Mammary epithelial cell (primary cell): ENCODE measurements at regions of chr2 and their contacts with region 1.

Region 1: GRCh38 chr2:123453772-123454171 is 571.3 kb upstream of the CNTNAP5 start:
- DNase-seq: no peak
- H3K4me3 ChIP-seq: no peak overlapping the region
- H3K27ac ChIP-seq: no peak overlapping the region
- H3K4me1 ChIP-seq: no peaks in the 10 kb centered on the region
- H3K27me3 ChIP-seq: no peaks in the 10 kb centered on the region
- CTCF ChIP-seq: no peak

Region 2: DNA sequence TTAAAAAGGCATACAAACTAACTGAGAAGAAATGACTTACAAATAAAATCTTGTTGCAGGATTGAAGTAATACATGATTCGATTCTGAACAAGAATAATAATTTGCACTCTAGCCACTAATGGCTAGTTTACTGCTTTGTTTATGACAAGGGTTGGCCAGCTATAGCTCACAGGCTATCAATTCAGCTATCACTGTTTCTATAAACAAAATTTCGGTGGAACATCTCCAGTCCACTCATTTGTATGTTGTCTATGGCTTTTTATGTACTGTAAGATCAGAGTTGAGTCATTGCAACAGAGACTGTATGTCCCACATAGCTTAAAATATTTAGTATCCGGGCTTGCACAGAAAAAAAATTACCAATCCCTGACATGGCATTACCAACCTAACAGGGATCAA is 27.6 kb after region 1 on chr2:
- CTCF ChIA-PET with region 1: no interaction called
- dilution Hi-C with region 1: no loop called
- in situ Hi-C with region 1: no loop called
- intact Hi-C with region 1: no loop called
- DNase-seq: no peak
- H3K4me3 ChIP-seq: no peak overlapping the region
- H3K27ac ChIP-seq: no peak overlapping the region
- H3K4me1 ChIP-seq: no peaks in the 10 kb centered on the region
- H3K27me3 ChIP-seq: no peaks in the 10 kb centered on the region
- CTCF ChIP-seq: no peak

Region 3: GRCh38 chr2:123840016-123840415 is 386.2 kb after region 1 on chr2:
- CTCF ChIA-PET with region 1: interaction called, 12 read pairs
- dilution Hi-C with region 1: no loop called
- in situ Hi-C with region 1: no loop called
- intact Hi-C with region 1: no loop called
- DNase-seq: peak; percentile 3
- H3K4me3 ChIP-seq: no peak overlapping the region
- H3K27ac ChIP-seq: no peak overlapping the region
- H3K4me1 ChIP-seq: no peaks in the 10 kb centered on the region
- H3K27me3 ChIP-seq: no peaks in the 10 kb centered on the region
- CTCF ChIP-seq: peak in 1 of 2 donors; percentile 7

Region 4: DNA sequence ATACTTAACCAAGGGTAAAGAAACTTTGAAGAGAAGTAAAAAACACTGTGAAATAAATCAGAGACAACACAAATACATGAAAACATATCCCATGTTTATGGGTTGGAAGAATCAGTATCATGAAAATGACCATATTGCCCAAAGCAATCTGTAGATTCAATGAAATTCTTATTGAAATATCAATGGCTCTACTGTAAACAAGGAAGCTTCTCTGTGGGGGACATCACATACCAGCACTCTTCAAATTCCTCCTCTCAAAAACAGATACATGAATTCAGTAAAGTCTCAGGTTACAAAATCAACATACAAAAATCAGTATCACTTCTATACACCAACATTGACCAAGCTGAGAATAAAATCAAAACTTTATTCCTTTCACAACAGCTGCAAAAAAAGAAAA is 507.8 kb after region 1 on chr2:
- CTCF ChIA-PET with region 1: no interaction called
- dilution Hi-C with region 1: no loop called
- in situ Hi-C with region 1: no loop called
- intact Hi-C with region 1: no loop called
- DNase-seq: no peak
- H3K4me3 ChIP-seq: no peak overlapping the region
- H3K27ac ChIP-seq: no peak overlapping the region
- H3K4me1 ChIP-seq: no peaks in the 10 kb centered on the region
- H3K27me3 ChIP-seq: no peaks in the 10 kb centered on the region
- CTCF ChIP-seq: no peak